ENCODE measurements at regions of chr11 and their contacts with region 1.

Region 1: DNA sequence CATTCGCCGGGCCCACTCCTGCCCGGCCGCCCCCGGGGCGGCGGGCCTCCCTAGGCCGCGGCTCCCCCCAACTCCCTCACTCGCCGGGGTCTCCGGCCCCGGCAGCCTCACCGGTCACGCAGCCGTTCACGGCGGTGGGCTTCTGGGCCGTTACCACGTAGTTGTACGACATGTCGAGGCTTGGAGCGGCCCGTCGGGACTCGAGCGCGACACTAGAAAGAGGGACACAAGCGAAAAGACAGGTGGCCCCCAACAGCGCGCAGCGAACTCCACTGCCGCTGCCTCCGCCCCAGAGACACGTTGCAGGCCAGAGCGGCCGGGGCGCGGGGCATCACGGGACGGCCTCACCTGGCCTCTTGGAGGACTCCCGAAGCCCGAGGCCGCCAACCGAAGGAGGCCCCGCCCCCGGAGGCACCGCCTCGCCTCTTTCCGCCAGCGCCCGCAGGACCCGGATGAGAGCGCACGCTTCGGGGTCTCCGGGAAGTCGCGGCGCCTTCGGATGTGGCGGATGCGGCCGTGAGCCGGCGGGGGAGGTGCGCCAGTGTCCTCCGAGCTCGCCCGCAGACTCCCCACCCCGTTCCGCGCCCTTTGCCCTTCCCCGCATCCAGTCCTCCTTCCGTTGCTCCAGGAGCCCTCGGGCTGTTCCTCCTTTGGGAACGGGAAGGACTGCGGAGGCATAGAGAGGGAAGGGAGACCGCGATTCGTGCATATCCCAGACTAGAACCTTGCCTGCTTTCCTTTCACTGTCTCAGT is at the starts of genes DDB1 and TKFC:
- DNase-seq: peak; percentile 88 to 99
- H3K4me3 ChIP-seq: peak within 1 kb of the TSS; percentile 99
- H3K27ac ChIP-seq: peak within 1 kb of the TSS; percentile 64
- H3K4me1 ChIP-seq: peaks cover 35% of the 10 kb centered on the region
- H3K27me3 ChIP-seq: no peaks in the 10 kb centered on the region
- CTCF ChIP-seq: no peak; the same call in 1 of the 2 replicates
- total RNA-seq, gene DDB1: 302 and 305 TPM in 2 replicates
- total RNA-seq, gene TKFC: 168 and 258 TPM in 2 replicates

Region 2: DNA sequence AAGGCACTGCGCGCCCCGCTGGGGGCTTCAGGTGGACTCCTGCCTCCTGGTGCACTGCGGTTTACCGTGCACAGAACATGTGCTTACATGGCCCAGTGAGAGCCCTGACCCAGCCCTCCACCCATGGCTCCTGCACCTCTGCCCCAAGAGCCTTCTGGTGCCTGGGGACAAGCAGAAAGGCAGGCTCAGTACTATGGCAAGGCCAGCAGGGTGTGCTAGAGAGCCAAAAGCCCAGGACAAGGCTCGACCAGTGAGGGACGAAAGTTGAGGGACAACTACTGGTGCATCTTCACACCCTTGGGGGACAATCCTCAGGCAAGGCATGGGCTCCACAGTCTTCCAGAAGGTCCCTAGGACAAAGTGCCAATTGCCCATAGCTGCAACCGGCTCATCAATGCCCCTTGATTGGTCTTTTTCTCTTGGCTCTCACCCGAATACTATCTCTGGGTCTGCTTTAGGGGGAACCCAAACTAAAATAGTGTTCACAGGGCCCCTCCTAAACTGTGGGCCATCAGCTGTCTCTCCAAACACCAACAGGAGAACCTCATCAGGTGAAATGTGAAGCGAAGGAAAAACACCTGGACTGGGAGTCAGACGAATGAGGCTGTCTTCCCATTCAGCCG is 78.5 kb before region 1 on chr11:
- CTCF ChIA-PET with region 1: no interaction called
- POLR2A ChIA-PET with region 1: no interaction called
- intact Hi-C with region 1: loop called (anchors 10 kb)
- DNase-seq: peak in 1 of 2 experiments; percentile 65
- H3K4me3 ChIP-seq: no peak overlapping the region
- H3K27ac ChIP-seq: no peak overlapping the region
- H3K4me1 ChIP-seq: no peaks in the 10 kb centered on the region
- H3K27me3 ChIP-seq: peaks cover 81% of the 10 kb centered on the region
- CTCF ChIP-seq: peak; percentile 84

Region 3: DNA sequence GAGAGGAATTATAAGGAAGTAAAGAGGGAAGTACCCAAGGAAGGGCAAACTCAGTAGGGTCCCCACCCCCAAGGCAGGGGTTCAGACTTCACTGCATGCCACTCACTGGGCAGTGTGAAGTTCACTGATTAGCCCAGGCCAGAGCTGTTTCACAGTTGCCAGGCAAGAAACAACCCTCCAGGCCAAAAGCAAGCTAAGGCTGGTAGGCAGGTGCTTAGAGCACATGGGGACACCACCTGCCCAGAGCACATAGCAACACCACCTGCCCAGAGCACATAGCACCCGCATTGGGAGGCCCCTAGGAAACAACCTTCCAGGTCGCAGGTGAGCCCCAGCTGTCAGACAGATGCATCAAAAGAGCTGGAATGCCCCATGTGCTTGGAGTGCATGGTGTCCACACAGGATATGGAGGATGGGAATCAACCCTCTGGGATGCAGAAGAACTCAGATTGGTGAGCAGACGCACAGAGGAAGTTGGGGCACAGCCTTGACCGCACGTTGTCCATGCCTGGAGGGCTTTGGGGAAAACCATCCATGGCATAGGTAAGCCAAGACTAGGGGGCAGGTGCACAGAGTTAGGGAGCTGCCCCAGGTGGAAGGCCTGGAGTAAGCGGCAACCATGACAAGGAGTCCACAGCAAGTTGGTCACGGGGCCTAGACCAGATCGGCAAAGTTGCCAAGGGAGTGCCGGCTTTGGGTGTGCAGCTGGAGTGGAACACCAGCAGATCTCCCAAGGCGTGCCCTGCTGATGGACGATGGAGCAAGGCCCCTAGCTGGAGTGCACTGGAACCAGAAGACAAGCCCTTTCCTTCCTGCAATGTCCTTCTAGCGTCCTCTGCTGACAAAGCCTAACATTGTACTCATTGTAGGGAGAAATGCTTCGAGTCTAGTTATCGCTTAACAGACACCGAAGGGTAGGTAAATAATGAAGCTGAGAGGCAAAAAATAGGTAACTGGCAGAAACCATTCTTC is 51.6 kb after region 1 on chr11:
- CTCF ChIA-PET with region 1: interaction called, 45 read pairs
- POLR2A ChIA-PET with region 1: interaction called, 7 read pairs
- intact Hi-C with region 1: loop called (anchors 1 kb)
- DNase-seq: no peak
- H3K4me3 ChIP-seq: no peak overlapping the region
- H3K27ac ChIP-seq: no peak overlapping the region
- H3K4me1 ChIP-seq: peaks cover 4% of the 10 kb centered on the region
- H3K27me3 ChIP-seq: no peaks in the 10 kb centered on the region
- CTCF ChIP-seq: no peak

Region 4: DNA sequence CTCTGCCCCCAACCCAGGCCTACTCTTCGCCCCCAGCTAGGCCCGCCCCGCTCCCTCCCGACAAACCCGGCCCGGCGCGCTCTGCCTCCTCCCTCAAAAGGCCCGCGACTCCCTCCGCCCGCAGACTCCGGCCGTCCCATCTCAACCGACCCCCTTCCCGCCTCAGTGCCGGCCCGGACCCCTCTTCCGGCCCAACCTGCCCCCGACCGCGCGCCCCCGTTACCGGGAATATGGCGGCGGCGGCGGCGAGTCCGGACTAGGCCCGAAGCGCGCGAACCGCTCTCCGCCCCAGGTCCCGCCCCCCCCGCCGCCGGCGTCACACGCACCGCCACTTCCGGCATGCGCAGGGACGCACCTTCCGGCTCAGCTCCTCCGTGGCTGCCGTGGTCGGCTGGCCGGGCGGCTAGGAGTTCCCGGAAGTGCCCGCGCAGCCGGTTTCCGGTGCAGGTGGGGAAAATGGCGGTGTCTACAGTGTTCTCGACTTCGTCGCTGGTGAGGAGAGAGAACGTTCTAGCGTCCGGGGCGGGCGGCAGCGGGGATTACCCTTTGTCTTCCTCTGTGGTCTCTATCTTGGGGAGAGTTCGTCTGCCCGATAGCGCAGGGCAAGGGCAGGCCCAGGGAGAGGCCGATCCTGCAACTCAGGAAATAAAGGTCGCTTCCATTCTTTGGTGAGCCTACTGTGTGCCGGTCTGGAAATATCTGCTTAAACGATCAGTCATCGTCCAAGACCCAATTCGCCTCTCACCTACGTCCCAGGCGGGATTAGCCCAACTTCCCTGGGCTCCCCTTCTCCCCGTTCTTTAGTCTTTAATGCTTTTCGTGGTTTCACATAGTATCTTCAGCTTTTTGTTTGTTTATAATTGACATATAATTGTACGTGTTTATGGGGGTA is 97.0 kb after region 1 on chr11 and contains the starts of genes CPSF7 and SDHAF2:
- CTCF ChIA-PET with region 1: interaction called, 27 read pairs
- POLR2A ChIA-PET with region 1: no interaction called
- intact Hi-C with region 1: no loop called
- DNase-seq: peak; percentile 89 to 97
- H3K4me3 ChIP-seq: peak within 1 kb of the TSS; percentile 97
- H3K27ac ChIP-seq: peak within 1 kb of the TSS; percentile 86
- H3K4me1 ChIP-seq: peaks cover 33% of the 10 kb centered on the region
- H3K27me3 ChIP-seq: no peaks in the 10 kb centered on the region
- CTCF ChIP-seq: 0 out of 2 replicates have a peak, but pooled peaks have one; percentile 9
- total RNA-seq, gene CPSF7: 82.7 and 87.0 TPM in 2 replicates
- total RNA-seq, gene SDHAF2: 32.5 and 38.3 TPM in 2 replicates

Region 5: GRCh38 chr11:61627567-61628445 is 294.8 kb after region 1 on chr11:
- CTCF ChIA-PET with region 1: no interaction called
- POLR2A ChIA-PET with region 1: no interaction called
- intact Hi-C with region 1: loop called (anchors 2 kb)
- DNase-seq: peak; percentile 70 to 80
- H3K4me3 ChIP-seq: no peak overlapping the region
- H3K27ac ChIP-seq: no peak overlapping the region
- H3K4me1 ChIP-seq: peaks cover 36% of the 10 kb centered on the region
- H3K27me3 ChIP-seq: no peaks in the 10 kb centered on the region
- CTCF ChIP-seq: peak; percentile 96

Region 6: DNA sequence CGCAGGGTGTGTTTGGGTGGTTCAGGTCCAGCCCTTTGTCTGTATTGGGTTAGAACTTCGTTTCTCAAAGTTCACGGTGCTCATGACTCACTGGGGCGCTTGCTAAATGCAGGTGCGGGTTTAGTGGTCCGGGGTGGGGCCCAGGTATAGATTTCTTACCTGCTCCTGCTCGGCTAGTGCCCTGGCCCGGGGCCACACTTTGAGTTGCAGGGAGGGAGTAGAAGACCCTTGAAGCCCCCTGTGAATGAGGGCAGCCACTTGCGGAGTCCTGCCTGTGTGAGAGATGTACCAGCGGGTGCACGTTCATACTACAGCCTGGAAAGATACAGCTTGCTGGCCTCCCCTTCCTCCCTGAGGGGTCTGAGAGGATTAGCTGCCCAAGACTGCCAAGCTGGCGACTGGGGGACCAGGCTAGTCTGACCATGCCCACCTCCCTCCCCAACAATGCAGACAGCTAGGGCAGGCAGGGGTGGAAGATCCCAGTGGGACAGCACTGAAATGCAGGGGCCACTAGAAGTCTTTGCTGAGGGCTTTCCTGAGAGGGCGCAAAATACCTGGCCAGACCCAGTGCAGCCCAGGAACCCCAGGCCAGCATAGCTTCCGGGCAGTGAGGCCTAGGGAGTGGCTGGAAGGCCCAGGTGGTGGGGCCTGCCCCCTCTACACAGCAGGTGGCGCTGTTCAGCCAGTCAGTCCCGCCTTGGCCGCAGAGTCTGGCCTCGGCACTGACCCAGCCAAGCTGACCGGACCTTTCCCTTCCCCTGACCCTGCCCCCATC is 414.4 kb after region 1 on chr11:
- CTCF ChIA-PET with region 1: interaction called, 16 read pairs
- POLR2A ChIA-PET with region 1: no interaction called
- intact Hi-C with region 1: no loop called
- DNase-seq: peak; percentile 65 to 86
- H3K4me3 ChIP-seq: no peak overlapping the region
- H3K27ac ChIP-seq: no peak overlapping the region
- H3K4me1 ChIP-seq: peaks cover 18% of the 10 kb centered on the region
- H3K27me3 ChIP-seq: no peaks in the 10 kb centered on the region
- CTCF ChIP-seq: peak; percentile 98

Measured in PC-9 (cell line).